ENCODE measurements at regions of chr11 and their contacts with region 1.

Region 1: DNA sequence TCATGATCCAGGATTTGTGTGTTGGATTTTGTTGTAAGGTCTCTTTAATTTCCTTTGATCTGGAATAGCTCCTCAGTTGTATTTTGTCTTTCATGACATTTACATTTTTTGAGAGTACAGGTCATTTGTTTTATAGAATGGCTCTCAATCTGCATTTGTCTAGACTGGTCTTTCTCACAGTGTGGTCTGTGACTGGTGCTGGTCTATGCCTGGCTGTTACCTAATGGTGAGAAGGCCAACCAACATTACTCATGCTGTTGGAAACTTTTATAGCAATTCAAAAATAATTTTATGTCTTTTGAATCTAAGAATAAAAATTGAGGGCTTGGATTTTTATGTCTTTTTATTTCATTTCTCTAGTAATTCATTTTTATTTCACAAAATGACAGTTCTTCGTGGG is 3.9 kb upstream of the NCR3LG1 start:
- DNase-seq: no peak
- ATAC-seq: no peak
- H3K4me3 ChIP-seq: no peak overlapping the region
- H3K27ac ChIP-seq: no peak overlapping the region
- H3K4me1 ChIP-seq: peaks cover 7% of the 10 kb centered on the region
- H3K27me3 ChIP-seq: no peaks in the 10 kb centered on the region
- CTCF ChIP-seq: no peak

Region 2: DNA sequence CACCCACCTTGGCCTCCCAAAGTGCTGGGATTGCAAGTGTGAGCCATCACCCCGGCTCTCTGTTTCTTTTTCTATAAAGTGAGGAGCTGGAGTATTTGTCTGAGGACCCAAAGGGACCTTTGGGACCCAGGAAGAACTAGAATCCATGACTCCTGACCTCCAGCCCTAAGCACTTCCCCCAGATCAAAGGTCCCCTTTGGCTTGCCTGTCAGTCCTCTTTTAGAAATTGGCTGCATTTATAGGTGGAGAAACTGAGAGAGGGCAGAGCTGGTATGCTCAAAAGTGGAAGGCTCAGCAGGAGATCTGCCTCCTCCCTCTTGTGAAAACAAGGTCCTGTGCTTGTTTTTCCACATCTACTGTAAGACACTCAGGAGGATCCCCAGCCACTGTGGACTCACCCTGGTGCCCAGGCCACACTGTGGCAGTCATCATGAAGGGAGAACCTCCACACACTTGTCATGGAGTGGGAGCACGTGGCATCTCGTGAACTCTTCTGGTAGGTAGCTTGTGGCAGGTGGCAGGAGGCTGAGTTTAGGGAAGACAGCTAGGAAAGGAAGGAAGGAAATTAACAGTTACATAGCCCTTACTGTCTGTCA is 321.1 kb before region 1 on chr11:
- CTCF ChIA-PET with region 1: no interaction called
- POLR2A ChIA-PET with region 1: no interaction called
- intact Hi-C with region 1: no loop called
- DNase-seq: no peak
- ATAC-seq: no peak
- H3K4me3 ChIP-seq: no peak overlapping the region
- H3K27ac ChIP-seq: no peak overlapping the region
- H3K4me1 ChIP-seq: no peaks in the 10 kb centered on the region
- H3K27me3 ChIP-seq: no peaks in the 10 kb centered on the region
- CTCF ChIP-seq: no peak

Region 3: DNA sequence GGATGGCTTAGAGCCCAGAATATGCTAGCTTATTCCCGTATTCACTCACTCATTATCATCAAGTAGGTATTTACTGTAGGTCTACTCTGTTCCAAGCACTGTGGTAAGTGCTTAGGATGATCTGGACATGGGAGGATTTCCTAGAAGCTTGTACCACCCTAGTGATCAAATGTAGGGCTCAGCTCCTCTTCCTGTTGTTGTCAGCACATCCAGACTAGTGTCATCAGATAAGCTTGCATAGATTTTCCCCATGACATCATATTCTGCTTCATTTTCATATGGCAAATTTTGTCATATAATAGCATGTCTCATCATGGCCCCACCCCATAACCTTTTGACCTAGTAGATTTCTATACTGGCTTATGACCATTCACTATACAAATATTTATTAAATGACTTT is 90.5 kb before region 1 on chr11:
- CTCF ChIA-PET with region 1: interaction called, 11 read pairs
- POLR2A ChIA-PET with region 1: no interaction called
- intact Hi-C with region 1: no loop called
- DNase-seq: peak; percentile 68
- ATAC-seq: peak; percentile 33
- H3K4me3 ChIP-seq: no peak overlapping the region
- H3K27ac ChIP-seq: peak overlapping the region; percentile 85
- H3K4me1 ChIP-seq: peaks cover 30% of the 10 kb centered on the region
- H3K27me3 ChIP-seq: no peaks in the 10 kb centered on the region
- CTCF ChIP-seq: no peak

Region 4: DNA sequence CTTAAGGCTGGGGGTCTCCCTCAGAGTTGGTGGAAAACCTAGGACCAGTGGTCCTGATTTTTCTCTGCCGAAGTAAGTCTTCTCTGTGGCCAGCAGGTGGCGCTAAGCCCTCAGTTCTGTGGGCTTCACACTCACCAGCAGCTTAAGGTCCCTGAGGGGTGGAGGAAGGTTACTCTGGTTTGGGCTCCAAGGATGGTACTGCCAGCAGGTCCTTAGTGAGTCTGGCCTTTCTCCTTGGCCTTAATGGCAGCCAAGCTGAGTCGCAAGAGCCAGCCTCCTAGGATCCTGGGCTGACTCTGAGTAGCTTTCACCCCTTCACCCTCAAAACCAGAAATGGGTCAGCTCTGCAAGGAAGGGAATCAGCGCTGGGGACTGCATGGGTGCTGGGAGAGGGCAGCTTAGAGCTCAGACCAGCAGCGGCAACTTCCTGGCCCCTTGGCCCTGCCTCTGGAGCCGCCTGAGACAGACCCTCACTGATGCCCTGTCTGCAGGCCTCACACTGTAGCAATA is 36.4 kb after region 1 on chr11:
- CTCF ChIA-PET with region 1: no interaction called
- POLR2A ChIA-PET with region 1: no interaction called
- intact Hi-C with region 1: no loop called
- DNase-seq: peak; percentile 75
- ATAC-seq: peak; percentile 66
- H3K4me3 ChIP-seq: no peak overlapping the region
- H3K27ac ChIP-seq: no peak overlapping the region
- H3K4me1 ChIP-seq: no peaks in the 10 kb centered on the region
- H3K27me3 ChIP-seq: no peaks in the 10 kb centered on the region
- CTCF ChIP-seq: peak; percentile 90

Measured in PC-3 (cell line).